Activated CD4-positive, alpha-beta memory T cell treated with anti-CD3 and anti-CD28 coated beads, Interleukin-2, amount 10 ng/mL, durations not matched to agents 7 days and 5 days (primary cell): ENCODE measurements at regions of chr3 and their contacts with region 1.

Region 1: DNA sequence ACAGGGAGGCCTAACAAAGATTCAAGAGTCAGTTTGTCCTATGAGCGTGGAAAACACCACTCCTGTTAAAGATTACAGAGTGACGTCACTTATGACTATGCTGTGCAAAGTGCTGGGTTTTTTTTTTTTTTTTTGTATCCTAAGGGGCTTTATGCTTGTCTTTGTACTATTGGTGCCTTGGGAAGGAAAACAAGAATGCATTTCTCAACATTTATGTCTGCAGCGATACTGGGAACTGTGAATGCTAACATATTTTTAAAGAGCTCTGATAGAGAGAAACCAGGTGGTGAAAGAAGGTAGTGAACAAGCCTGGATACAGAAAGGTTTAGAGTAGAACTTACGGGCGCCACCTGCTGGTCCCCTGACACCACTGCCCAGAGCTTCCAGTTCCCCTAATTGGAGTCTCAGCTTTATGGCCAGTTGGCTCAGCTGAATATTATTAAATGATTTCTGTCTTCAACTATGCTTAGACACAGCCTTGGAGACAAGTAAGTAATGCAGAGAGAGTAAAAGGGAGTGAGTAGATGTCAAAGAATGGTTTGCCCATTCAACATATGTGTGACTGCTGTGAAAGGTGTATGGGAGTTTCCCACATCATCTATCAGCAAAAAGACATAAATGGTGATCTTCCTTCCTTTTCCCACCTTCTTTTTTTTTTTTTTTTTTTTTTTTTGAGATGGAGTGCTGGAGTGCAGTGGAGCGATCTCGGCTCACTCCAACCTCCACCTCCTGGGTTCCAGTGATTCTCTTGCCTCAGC is 807.9 kb upstream of the CFAP20DC start:
- DNase-seq: peak; percentile 80
- H3K4me3 Mint-ChIP-seq: no peak overlapping the region
- H3K27ac Mint-ChIP-seq: no peak overlapping the region
- H3K4me1 Mint-ChIP-seq: peaks cover 1% of the 10 kb centered on the region
- H3K27me3 Mint-ChIP-seq: no peaks in the 10 kb centered on the region

Region 2: GRCh38 chr3:59212128-59212779 is 645.5 kb before region 1 on chr3:
- CTCF ChIA-PET with region 1: interaction called, 13 read pairs
- POLR2A ChIA-PET with region 1: no interaction called
- DNase-seq: no peak
- H3K4me3 Mint-ChIP-seq: no peak overlapping the region
- H3K27ac Mint-ChIP-seq: no peak overlapping the region
- H3K4me1 Mint-ChIP-seq: no peaks in the 10 kb centered on the region
- H3K27me3 Mint-ChIP-seq: peaks cover 4% of the 10 kb centered on the region

Region 3: GRCh38 chr3:59313365-59313764 is 544.4 kb before region 1 on chr3:
- CTCF ChIA-PET with region 1: interaction called, 14 read pairs
- POLR2A ChIA-PET with region 1: no interaction called
- DNase-seq: peak; percentile 48
- H3K4me3 Mint-ChIP-seq: no peak overlapping the region
- H3K27ac Mint-ChIP-seq: no peak overlapping the region
- H3K4me1 Mint-ChIP-seq: peaks cover 10% of the 10 kb centered on the region
- H3K27me3 Mint-ChIP-seq: no peaks in the 10 kb centered on the region

Region 4: GRCh38 chr3:59575113-59576001 is 282.4 kb before region 1 on chr3:
- CTCF ChIA-PET with region 1: interaction called, 22 read pairs
- POLR2A ChIA-PET with region 1: interaction called, 3 read pairs
- DNase-seq: peak; percentile 84
- H3K4me3 Mint-ChIP-seq: no peak overlapping the region
- H3K27ac Mint-ChIP-seq: no peak overlapping the region
- H3K4me1 Mint-ChIP-seq: no peaks in the 10 kb centered on the region
- H3K27me3 Mint-ChIP-seq: no peaks in the 10 kb centered on the region